Activated CD4-positive, alpha-beta memory T cell treated with anti-CD3 and anti-CD28 coated beads for 36 hours (primary cell): ENCODE measurements at regions of chr2 and their contacts with region 1.

Region 1: DNA sequence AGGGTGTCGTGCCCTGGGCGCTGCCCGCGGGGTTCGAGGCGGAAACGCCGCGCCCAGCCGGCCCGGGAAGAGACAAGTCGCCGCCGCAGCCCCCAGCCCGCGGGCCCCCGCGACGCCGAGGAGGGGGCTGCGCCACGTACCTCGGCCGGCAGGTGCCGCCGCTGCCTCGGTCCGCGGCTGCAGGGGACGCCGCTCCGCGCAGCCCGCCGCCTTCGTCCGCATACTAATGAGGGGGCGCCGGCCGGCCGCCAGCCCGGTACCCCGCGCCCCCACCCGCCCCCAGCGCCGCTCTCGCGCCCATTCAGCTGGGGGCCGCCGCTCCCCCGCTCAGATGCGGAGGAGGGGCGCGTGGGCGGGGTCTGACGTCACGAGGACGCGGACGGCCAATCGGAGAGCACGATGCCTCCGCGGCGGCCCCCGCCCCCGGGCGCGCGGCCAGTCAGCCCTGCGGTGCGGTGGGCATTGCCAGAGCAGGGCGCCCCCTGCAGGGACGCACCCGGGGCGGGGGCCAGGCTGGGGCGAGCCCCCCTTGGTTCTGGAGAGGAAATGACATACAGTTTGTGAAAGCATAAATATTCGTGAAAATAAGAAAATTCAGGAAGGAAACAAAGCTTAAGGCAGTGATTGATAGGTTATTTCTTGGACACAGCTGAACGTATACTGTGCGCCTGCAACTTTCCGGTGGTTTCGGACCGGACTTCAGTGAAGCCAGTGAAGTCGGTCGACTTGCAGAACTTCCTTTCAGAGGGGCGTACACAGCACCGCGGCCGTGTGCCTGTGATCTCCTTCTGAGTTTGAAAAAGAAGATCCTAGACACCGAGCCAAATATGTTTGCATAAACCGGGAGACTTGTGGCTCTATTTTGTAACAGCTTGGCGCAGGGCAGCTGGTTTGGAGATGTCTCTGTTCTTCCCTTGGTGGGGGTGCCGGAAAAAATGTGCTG is at the start of gene ST3GAL5:
- DNase-seq: peak; percentile 91
- H3K4me3 Mint-ChIP-seq: peak within 1 kb of the TSS; percentile 90
- H3K27ac Mint-ChIP-seq: peak within 1 kb of the TSS; percentile 78
- H3K4me1 Mint-ChIP-seq: peaks cover 59% of the 10 kb centered on the region
- H3K27me3 Mint-ChIP-seq: no peaks in the 10 kb centered on the region
- total RNA-seq, gene ST3GAL5: 9.6 to 11.5 TPM

Region 2: GRCh38 chr2:85718009-85718391 is 171.0 kb before region 1 on chr2:
- CTCF ChIA-PET with region 1: no interaction called
- POLR2A ChIA-PET with region 1: no interaction called
- intact Hi-C with region 1: no loop called
- DNase-seq: no peak
- H3K4me3 Mint-ChIP-seq: no peak overlapping the region
- H3K27ac Mint-ChIP-seq: no peak overlapping the region
- H3K4me1 Mint-ChIP-seq: no peaks in the 10 kb centered on the region
- H3K27me3 Mint-ChIP-seq: no peaks in the 10 kb centered on the region

Region 3: DNA sequence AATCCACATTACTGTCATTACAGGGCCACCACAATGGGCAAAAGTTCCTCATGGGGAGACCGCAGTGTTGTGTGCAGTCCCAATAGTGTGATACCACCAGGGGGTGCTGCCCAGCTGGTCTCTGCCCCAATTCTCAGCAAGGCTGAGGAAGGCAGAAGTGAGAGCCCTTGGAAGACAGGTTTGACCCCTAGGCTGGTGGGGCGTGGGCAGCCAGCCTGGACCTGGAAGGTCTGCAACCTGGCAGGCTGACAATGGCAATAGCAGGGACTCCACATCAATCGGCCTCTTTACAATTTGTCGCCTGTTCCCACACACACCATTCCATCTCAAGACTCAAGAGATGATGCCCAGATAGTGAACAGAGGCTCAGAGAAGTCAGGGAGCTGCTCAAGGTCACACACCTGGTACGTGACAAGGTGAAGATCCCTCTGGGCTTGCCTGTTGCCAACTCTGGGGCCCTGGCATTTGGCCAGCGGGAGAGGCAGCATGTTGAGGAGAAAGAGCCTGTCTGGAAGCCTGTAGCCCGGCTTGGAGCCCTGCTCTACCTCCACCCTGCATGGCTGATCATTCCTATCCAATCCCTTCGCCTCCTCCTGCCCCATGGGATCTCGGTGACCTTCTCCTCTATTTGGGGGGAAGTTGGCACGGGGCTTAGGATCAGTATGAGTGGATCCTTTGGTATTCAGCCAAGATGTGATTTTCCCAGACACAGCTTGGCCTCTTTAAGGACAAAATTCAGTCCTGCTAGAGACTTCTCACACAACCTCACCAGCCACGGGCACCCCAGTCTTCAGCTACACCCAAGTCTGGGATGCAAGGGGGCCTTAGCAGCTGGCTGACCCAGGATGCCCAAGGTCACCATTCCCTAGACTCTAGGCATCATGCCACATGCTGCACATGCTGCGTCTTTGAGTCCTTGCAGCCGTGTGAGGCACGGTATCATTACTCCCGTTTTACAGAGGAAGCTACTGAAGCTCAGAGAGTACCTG is 138.1 kb before region 1 on chr2:
- CTCF ChIA-PET with region 1: interaction called, 3 read pairs
- POLR2A ChIA-PET with region 1: no interaction called
- intact Hi-C with region 1: loop called (anchors 5 kb)
- DNase-seq: peak; percentile 68
- H3K4me3 Mint-ChIP-seq: no peak overlapping the region
- H3K27ac Mint-ChIP-seq: no peak overlapping the region
- H3K4me1 Mint-ChIP-seq: peaks cover 13% of the 10 kb centered on the region
- H3K27me3 Mint-ChIP-seq: peaks cover 41% of the 10 kb centered on the region

Region 4: GRCh38 chr2:85852937-85853498 is 35.9 kb before region 1 on chr2:
- CTCF ChIA-PET with region 1: interaction called, 30 read pairs
- POLR2A ChIA-PET with region 1: interaction called, 5 read pairs
- intact Hi-C with region 1: loop called (anchors 2 kb)
- DNase-seq: peak; percentile 69
- H3K4me3 Mint-ChIP-seq: peak overlapping the region; percentile 77
- H3K27ac Mint-ChIP-seq: peak overlapping the region; percentile 98
- H3K4me1 Mint-ChIP-seq: peaks cover 71% of the 10 kb centered on the region
- H3K27me3 Mint-ChIP-seq: no peaks in the 10 kb centered on the region

Region 5: GRCh38 chr2:85878719-85879385 is 10.1 kb before region 1 on chr2:
- CTCF ChIA-PET with region 1: interaction called, 21 read pairs
- POLR2A ChIA-PET with region 1: interaction called, 4 read pairs
- intact Hi-C with region 1: no loop called
- DNase-seq: no peak
- H3K4me3 Mint-ChIP-seq: no peak overlapping the region
- H3K27ac Mint-ChIP-seq: no peak overlapping the region
- H3K4me1 Mint-ChIP-seq: peaks cover 49% of the 10 kb centered on the region
- H3K27me3 Mint-ChIP-seq: no peaks in the 10 kb centered on the region

Region 6: DNA sequence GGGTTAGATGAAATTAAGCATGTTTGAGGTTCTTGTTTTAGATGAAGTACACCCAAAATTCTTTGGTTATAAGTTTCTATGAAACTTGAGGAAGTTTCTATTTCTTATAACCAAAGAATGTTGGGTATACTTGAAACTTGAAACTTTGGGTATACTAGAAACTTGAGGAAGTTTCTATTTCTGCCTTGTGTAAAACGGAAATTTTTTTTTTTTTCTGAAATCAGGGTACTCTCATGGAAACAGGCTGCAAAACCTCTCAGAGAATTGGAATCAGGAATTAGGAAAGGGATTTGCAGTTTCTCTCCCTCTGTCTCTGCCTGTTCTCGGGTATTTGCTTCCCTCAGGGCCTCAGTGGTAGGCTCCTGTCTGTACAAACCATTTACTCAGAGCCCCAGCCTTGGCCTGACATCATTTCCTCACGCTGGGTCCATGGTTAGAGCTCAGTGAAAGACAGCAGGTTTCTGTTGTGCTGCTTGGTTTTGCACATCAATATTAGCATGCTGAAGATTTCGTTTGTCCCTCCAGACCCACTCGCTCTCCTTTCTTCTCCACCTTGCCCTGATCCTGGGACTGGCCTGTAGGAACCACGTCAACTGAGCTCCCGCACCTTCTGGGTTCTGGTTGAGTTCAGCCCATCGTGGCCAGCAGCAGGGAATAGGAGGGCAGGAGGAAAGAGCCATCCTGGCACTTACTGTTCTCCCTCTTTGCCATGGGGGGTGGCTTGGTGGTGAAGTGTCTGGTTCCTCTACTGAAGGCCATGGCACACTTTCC is 110.3 kb after region 1 on chr2:
- CTCF ChIA-PET with region 1: interaction called, 5 read pairs
- POLR2A ChIA-PET with region 1: interaction called, 3 read pairs
- intact Hi-C with region 1: loop called (anchors 5 kb)
- DNase-seq: peak; percentile 63
- H3K4me3 Mint-ChIP-seq: peak overlapping the region; percentile 5
- H3K27ac Mint-ChIP-seq: peak overlapping the region; percentile 67
- H3K4me1 Mint-ChIP-seq: peaks cover 35% of the 10 kb centered on the region
- H3K27me3 Mint-ChIP-seq: peaks cover 2% of the 10 kb centered on the region

Region 7: GRCh38 chr2:86160156-86160952 is 271.4 kb after region 1 on chr2:
- CTCF ChIA-PET with region 1: no interaction called
- POLR2A ChIA-PET with region 1: no interaction called
- intact Hi-C with region 1: no loop called
- DNase-seq: no peak
- H3K4me3 Mint-ChIP-seq: no peak overlapping the region
- H3K27ac Mint-ChIP-seq: peak overlapping the region; percentile 23
- H3K4me1 Mint-ChIP-seq: no peaks in the 10 kb centered on the region
- H3K27me3 Mint-ChIP-seq: no peaks in the 10 kb centered on the region

Region 8: DNA sequence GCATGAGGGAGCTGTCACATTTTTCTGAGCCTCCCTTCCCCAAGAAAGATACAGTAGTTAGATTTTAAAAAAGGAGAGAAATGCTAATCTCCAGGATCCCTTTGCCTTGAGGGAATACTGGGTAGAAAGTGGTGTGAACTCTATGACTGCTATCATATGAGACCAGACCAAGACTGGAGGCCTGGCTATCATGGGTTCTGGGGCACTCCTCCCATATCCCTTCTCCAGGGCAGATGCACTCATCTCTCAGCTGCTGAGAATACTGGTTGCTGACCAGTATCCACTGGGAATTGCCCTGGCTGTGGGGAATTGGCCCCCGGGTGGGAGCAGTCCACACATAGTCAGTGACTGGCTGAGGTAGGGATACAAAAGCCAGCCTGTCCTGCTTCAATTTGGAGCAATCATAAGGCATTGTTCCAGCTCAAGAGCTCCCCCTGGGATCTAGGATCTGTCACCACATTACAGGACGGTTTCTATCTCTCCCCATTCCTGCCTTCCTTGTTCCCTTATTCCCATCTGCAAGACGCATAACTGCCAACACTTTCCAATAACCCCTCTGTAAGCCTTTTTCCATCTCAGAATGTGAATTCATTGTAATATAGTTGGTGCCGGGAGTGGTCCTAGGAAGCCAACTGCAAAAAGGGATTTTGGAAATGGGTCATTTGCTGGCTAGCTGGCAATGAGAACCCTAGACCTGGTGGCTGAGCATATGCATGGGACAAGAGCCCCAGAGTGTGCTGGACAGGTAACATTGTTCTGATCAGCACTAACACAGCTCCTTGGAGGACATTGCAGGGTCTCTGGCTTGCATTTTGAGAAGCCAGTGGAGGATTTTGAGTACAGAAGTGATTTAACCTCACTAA is 483.9 kb after region 1 on chr2:
- CTCF ChIA-PET with region 1: no interaction called
- POLR2A ChIA-PET with region 1: no interaction called
- intact Hi-C with region 1: no loop called
- DNase-seq: no peak
- H3K4me3 Mint-ChIP-seq: no peak overlapping the region
- H3K27ac Mint-ChIP-seq: no peak overlapping the region
- H3K4me1 Mint-ChIP-seq: peaks cover 26% of the 10 kb centered on the region
- H3K27me3 Mint-ChIP-seq: no peaks in the 10 kb centered on the region